ENCODE measurements at regions of chr17 and their contacts with region 1.

Region 1: DNA sequence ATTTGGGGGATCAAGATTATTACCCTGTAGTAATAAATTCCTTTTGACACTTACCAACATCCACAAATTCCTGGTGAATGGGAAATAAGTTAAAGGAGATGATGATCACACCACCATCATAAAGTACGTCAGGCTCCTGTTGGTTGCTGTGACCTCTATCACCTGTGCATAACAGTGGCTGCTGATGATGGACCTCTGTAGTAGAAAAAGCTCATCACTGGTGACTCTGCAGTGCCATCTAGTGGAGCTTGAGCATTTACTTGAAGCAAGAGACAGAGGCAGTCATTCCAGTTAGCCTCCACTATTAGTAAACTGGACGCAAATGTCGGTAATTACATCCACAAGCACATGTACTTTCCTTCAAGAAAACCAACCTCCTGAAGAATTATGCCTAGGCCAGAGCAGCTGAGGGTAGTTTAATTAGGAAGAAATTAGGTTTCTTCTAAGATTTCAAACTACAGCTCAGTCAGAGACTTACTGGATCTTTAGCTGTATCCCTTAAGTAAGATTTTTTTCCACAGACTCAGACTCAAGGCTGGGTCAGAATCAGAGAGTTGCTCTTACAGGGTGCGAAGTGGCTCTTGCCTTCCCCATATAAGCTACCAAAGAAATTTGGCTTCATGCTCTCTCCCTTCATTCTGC is 39.3 kb downstream of the CYB561 start:
- DNase-seq: peak; percentile 82
- H3K4me3 ChIP-seq: no peak overlapping the region
- H3K4me3 Mint-ChIP-seq: no peak overlapping the region
- H3K27ac Mint-ChIP-seq: no peak overlapping the region
- H3K4me1 ChIP-seq: no peaks in the 10 kb centered on the region
- H3K4me1 Mint-ChIP-seq: no peaks in the 10 kb centered on the region
- H3K27me3 ChIP-seq: no peaks in the 10 kb centered on the region
- H3K27me3 Mint-ChIP-seq: peaks cover 15% of the 10 kb centered on the region
- CTCF ChIP-seq: peak; percentile 80 to 83

Region 2: DNA sequence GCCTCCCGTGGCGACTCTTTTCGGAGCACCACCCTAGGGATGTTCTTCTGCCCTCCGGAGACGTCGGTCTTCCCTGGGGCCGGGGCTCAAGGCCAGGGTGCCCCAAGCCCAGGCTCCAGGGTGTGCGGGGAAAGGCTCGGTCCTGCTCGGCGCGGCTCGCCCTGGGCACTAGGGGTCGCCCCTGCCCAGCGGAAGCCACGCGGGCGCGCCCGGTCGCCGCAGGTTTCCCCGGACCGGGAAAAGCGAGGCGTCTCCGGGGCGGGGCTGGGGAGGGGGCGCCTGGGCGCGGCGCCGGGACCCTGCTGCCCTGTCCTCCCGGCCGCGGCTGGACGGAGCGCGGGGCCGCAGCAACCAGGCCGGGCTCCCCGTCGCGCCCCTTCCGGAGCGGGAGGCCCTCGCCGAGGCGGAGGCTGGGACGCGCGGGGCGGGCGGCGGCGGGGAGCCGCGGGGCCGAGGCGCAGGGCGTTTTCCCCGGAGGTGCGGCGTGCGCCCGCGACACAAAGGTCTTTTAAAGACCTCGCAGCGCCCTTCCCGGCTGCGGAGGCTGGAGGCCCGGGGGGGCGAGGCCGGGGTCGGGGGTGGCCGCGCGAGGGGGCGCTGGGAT is 702.9 kb before region 1 on chr17:
- CTCF ChIA-PET with region 1: no interaction called
- POLR2A ChIA-PET with region 1: no interaction called
- intact Hi-C with region 1: loop called (anchors 5 kb)
- DNase-seq: peak; percentile 58 to 86
- H3K4me3 ChIP-seq: peak overlapping the region; percentile 33
- H3K4me3 Mint-ChIP-seq: peak overlapping the region; percentile 62
- H3K27ac Mint-ChIP-seq: no peak overlapping the region
- H3K4me1 ChIP-seq: peaks cover 14% of the 10 kb centered on the region
- H3K4me1 Mint-ChIP-seq: no peaks in the 10 kb centered on the region
- H3K27me3 ChIP-seq: peaks cover 9% of the 10 kb centered on the region
- H3K27me3 Mint-ChIP-seq: peaks cover 32% of the 10 kb centered on the region
- CTCF ChIP-seq: peak; percentile 80 to 82

Region 3: DNA sequence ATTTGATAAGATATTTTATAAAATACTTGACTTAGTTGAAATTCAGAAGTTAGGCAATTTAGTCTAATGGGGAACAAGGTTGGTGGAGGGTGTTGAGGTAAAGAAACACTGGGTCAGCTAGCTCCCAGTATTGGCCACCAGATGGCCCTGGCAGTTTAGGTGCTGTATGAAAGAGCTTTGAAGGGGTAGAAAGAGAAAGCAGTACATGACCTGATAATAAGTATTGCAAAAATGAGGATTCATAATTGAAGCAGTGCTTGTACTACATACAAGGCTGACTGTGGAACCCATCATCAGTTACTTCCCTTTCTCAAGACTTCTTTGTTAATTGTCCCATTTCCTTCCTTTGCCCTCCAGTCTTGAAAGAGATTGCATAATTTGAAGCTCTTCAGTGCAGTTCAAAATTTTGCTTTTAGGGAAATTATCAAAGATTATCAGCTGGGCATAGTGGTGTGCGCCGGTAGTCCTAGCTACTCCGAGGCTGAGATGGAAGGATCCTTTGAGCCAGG is 411.4 kb before region 1 on chr17:
- CTCF ChIA-PET with region 1: interaction called, 25 read pairs
- POLR2A ChIA-PET with region 1: no interaction called
- intact Hi-C with region 1: loop called (anchors 1 kb)
- DNase-seq: peak in 1 of 2 experiments; percentile 35
- H3K4me3 ChIP-seq: no peak overlapping the region
- H3K4me3 Mint-ChIP-seq: no peak overlapping the region
- H3K27ac Mint-ChIP-seq: no peak overlapping the region
- H3K4me1 ChIP-seq: no peaks in the 10 kb centered on the region
- H3K4me1 Mint-ChIP-seq: no peaks in the 10 kb centered on the region
- H3K27me3 ChIP-seq: no peaks in the 10 kb centered on the region
- H3K27me3 Mint-ChIP-seq: peaks cover 8% of the 10 kb centered on the region
- CTCF ChIP-seq: peak; percentile 43 to 84

Region 4: DNA sequence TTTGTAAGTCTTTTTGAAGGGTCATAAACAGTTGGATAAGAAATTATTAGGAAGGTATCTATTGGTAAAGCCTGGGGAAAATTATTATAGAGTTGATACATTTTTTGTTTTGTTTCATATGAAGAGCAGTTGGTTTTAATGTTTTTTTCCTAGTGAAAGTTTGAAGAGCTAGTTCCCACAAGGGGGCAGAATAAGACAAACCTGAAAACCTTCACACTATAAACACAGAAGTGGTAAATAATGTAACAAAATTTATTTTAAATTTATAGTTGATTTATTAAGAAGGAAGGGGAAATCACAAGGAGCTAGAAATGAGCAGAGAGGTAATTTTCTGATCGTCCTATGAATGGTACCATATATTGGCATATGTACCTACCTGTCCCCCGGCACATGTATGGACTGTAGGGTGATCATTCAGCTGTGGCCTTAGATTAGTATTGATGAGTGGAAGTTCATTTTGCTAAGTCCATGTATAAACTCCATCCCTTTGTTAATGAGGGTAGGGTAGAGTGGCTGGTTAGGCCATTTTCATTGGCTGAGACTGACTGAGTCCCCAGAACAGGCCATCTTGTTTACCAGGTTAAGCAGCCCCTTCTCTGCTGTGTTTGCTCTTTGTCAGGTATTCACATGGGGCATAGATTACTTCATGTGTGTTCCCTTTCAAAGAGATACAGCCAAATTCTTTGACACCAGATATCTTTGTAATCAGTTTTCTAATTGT is 324.4 kb before region 1 on chr17:
- CTCF ChIA-PET with region 1: interaction called, 13 read pairs
- POLR2A ChIA-PET with region 1: no interaction called
- intact Hi-C with region 1: loop called (anchors 1 kb)
- DNase-seq: no peak
- H3K4me3 ChIP-seq: no peak overlapping the region
- H3K4me3 Mint-ChIP-seq: no peak overlapping the region
- H3K27ac Mint-ChIP-seq: no peak overlapping the region
- H3K4me1 ChIP-seq: no peaks in the 10 kb centered on the region
- H3K4me1 Mint-ChIP-seq: no peaks in the 10 kb centered on the region
- H3K27me3 ChIP-seq: no peaks in the 10 kb centered on the region
- H3K27me3 Mint-ChIP-seq: peaks cover 19% of the 10 kb centered on the region
- CTCF ChIP-seq: peak; percentile 16 to 30

Region 5: GRCh38 chr17:63113183-63113582 is 293.6 kb before region 1 on chr17:
- CTCF ChIA-PET with region 1: interaction called, 12 read pairs
- POLR2A ChIA-PET with region 1: no interaction called
- intact Hi-C with region 1: loop called (anchors 1 kb)
- DNase-seq: no peak
- H3K4me3 ChIP-seq: no peak overlapping the region
- H3K4me3 Mint-ChIP-seq: no peak overlapping the region
- H3K27ac Mint-ChIP-seq: no peak overlapping the region
- H3K4me1 ChIP-seq: no peaks in the 10 kb centered on the region
- H3K4me1 Mint-ChIP-seq: no peaks in the 10 kb centered on the region
- H3K27me3 ChIP-seq: no peaks in the 10 kb centered on the region; the same call in 1 of the 2 replicates
- H3K27me3 Mint-ChIP-seq: peaks cover 5% of the 10 kb centered on the region
- CTCF ChIP-seq: no peak

Region 6: DNA sequence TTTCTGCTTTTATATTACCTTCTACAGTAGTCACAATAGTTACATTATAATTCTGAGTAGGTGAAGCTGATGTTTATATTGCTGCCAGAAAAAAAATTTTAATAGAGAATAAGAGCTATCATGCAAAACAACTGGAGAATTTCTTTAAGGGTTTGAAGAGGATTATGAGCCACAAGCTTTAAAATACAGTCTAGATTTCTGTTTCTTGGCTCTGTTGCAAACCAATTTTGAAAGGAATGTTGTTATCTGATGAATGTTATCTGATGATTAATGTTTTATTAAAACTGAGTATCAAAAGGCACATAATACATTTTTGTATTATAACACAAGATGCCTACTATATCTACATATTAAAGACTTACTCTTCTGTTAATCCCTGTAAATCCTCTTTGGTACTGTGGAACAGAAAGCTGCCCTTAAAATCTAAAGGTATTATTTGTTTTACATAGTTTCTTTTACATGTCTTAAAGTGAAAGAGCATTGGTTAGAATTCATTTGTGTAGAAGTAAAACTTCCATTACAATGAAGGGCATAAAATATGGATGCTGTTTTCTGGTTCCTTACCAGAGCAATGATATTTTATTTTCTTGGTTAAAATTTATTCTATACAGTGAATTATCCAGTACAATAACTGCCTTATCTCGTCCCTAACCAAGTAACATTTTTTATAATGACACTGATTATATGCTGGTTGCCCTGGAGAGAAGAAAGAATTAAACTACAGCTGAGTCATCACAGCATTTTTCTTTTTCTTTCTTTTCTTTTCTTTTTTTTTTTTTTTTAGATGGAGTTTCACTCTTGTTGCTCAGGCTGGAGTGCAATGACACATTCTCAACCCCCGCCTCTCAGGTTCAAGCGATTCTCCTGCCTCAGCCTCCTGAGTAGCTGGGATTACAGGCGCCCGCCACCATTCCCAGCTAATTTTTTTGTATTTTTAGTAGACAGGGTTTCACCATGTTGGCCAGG is 235.1 kb before region 1 on chr17:
- CTCF ChIA-PET with region 1: no interaction called
- POLR2A ChIA-PET with region 1: no interaction called
- intact Hi-C with region 1: no loop called
- DNase-seq: no peak
- H3K4me3 ChIP-seq: no peak overlapping the region
- H3K4me3 Mint-ChIP-seq: no peak overlapping the region
- H3K27ac Mint-ChIP-seq: no peak overlapping the region
- H3K4me1 ChIP-seq: no peaks in the 10 kb centered on the region
- H3K4me1 Mint-ChIP-seq: no peaks in the 10 kb centered on the region
- H3K27me3 ChIP-seq: no peaks in the 10 kb centered on the region
- H3K27me3 Mint-ChIP-seq: peaks cover 5% of the 10 kb centered on the region
- CTCF ChIP-seq: no peak

Region 7: DNA sequence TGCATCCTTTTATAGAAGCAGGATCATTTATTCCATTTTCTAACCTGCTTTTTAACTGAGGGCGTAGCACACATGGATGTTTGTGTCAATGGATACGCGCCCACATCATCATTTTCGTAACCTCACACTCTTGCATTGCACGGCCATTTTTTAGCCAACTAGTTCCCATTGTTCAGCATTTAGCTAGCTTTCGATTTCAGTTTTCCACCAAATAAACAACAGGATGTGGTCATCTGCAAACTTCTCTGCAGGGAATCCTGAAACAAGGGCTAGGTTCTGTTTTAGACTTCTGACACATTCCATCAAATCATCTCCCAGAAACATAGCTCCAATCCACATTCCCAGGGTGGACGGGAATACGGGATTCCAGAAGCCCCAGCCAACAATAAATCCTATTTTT is 32.9 kb after region 1 on chr17:
- CTCF ChIA-PET with region 1: no interaction called
- POLR2A ChIA-PET with region 1: no interaction called
- intact Hi-C with region 1: no loop called
- DNase-seq: no peak
- H3K4me3 ChIP-seq: no peak overlapping the region
- H3K4me3 Mint-ChIP-seq: no peak overlapping the region
- H3K27ac Mint-ChIP-seq: peak overlapping the region; percentile 33
- H3K4me1 ChIP-seq: peaks cover 1% of the 10 kb centered on the region; the same call in 1 of the 2 replicates
- H3K4me1 Mint-ChIP-seq: peaks cover under 1% of the 10 kb centered on the region
- H3K27me3 ChIP-seq: no peaks in the 10 kb centered on the region
- H3K27me3 Mint-ChIP-seq: no peaks in the 10 kb centered on the region
- CTCF ChIP-seq: no peak